HCT116 (cell line): ENCODE measurements at regions of chr19 and their contacts with region 1.

Region 1: GRCh38 chr19:44500148-44500956 is at the start of gene ZNF180:
- DNase-seq: peak; percentile 92
- ATAC-seq: peak; percentile 93
- H3K4me3 ChIP-seq: peak within 1 kb of the TSS; percentile 89
- H3K27ac ChIP-seq: peak within 1 kb of the TSS; percentile 70
- H3K4me1 ChIP-seq: peaks cover 0 to 16% of the 10 kb centered on the region in 2 experiments; a peak in 1 of 4 replicates
- H3K27me3 ChIP-seq: no peaks in the 10 kb centered on the region
- CTCF ChIP-seq: peak in 2 of 3 experiments; percentile 36 to 52; a peak in 3 of 6 replicates
- POLR2A ChIP-seq: peak; percentile 63
- RAD21 ChIP-seq: no peak
- total RNA-seq, gene ZNF180: 7.3 TPM

Region 2: GRCh38 chr19:44025217-44025936 is 475.0 kb before region 1 on chr19 and contains the start of gene ZNF222:
- CTCF ChIA-PET with region 1: no interaction called
- POLR2A ChIA-PET with region 1: no interaction called
- RAD21 ChIA-PET with region 1: no interaction called
- intact Hi-C with region 1: loop called (anchors 10 kb)
- DNase-seq: peak; percentile 73
- ATAC-seq: peak; percentile 98
- H3K4me3 ChIP-seq: peak within 1 kb of the TSS; percentile 70 to 75
- H3K27ac ChIP-seq: peak within 1 kb of the TSS; percentile 34; the same call in 1 of the 2 replicates
- H3K4me1 ChIP-seq: no peaks in the 10 kb centered on the region; a peak in 1 of 4 replicates
- H3K27me3 ChIP-seq: no peaks in the 10 kb centered on the region
- CTCF ChIP-seq: no peak
- POLR2A ChIP-seq: no peak
- RAD21 ChIP-seq: no peak
- total RNA-seq, gene ZNF222: 3.0 TPM

Region 3: DNA sequence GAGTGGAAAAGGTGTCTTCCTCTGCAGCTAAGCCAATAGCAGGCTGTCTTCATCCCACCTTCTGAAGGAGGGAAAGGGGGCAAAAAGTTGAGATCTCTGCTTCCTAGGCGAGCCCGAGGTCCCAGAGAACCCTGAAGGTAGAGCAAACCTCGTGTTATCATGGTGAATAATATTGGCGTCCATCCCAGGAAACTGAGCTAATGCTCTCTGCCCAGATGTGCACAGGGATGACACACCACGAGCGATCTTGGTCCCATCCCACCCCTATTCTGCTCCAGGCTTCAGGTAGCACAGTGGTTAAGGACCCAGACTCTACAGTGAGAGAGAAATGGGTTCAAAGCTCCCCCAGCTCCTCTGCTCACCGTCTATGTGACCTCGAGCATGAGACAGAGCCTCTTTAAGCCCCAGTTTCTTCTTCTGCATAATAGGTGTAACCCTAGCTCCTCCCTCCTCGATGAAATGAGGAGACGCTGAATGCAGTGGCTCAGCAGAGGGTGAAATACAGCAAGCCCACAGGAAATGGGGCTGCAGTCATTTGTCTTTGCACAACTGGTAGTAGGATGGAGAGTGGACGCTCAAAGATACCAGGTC is 39.0 kb after region 1 on chr19:
- CTCF ChIA-PET with region 1: no interaction called
- POLR2A ChIA-PET with region 1: no interaction called
- RAD21 ChIA-PET with region 1: no interaction called
- intact Hi-C with region 1: no loop called
- DNase-seq: no peak
- ATAC-seq: no peak
- H3K4me3 ChIP-seq: no peak overlapping the region
- H3K27ac ChIP-seq: no peak overlapping the region
- H3K4me1 ChIP-seq: no peaks in the 10 kb centered on the region
- H3K27me3 ChIP-seq: no peaks in the 10 kb centered on the region
- CTCF ChIP-seq: no peak
- POLR2A ChIP-seq: no peak
- RAD21 ChIP-seq: no peak